Activated B cell treated with CpG ODN at 0.5 μM for 24 hours (primary cell): ENCODE measurements at regions of chr1 and their contacts with region 1.

Region 1: GRCh38 chr1:32179443-32180185 is at the start of gene TXLNA:
- DNase-seq: peak; percentile 89
- ATAC-seq: peak; percentile 91
- H3K4me3 Mint-ChIP-seq: peak within 1 kb of the TSS; percentile 90
- H3K27ac Mint-ChIP-seq: peak within 1 kb of the TSS; percentile 98
- H3K4me1 Mint-ChIP-seq: peaks cover 40% of the 10 kb centered on the region
- H3K27me3 Mint-ChIP-seq: no peaks in the 10 kb centered on the region
- CTCF ChIP-seq: no peak
- total RNA-seq, gene TXLNA: 52.0 and 54.1 TPM in 2 replicates

Region 2: DNA sequence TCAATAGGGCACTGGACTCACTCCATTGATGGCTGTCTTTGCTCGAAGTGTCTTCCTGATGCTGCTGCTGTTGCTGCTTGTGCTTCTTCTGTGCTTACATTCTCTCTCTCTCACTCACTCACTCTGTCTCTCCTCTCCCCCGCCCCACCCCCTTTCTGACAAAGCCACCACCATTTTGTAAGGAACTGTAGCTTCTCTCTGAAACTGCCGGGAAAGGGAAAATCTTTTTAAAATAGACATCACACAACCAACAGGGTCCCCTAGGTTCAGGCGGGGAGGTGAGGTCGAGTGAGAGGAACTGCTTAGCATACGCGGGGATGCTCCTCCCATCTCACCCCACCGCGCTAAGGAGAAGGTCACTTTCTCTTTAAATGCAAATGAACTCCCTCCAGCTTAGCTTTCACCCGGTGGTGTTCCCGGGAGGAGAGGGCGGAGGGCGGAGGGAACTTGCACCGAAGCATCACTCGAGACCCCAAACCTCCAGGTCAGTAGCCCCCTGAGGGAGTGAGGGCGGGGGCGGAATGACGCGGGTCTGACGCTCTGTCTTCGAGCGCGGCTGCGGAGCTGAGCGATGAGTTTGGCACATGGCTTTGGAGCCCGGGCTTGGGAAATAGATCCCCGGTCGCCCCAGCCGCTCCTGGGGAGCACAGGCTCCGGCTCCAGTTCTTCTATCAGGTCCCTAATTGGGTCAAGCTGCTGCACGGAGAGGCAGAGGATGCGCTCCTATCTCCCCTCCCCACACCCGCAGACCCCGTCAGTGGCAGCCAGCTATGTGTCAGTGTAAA is 20.8 kb after region 1 on chr1 and contains the start of gene CCDC28B:
- CTCF ChIA-PET with region 1: interaction called, 4 read pairs
- POLR2A ChIA-PET with region 1: interaction called, 37 read pairs
- intact Hi-C with region 1: loop called (anchors 1 kb)
- DNase-seq: peak; percentile 62
- ATAC-seq: peak; percentile 51
- H3K4me3 Mint-ChIP-seq: peak within 1 kb of the TSS; percentile 87
- H3K27ac Mint-ChIP-seq: peak within 1 kb of the TSS; percentile 87
- H3K4me1 Mint-ChIP-seq: peaks cover 49% of the 10 kb centered on the region
- H3K27me3 Mint-ChIP-seq: no peaks in the 10 kb centered on the region
- CTCF ChIP-seq: no peak
- total RNA-seq, gene CCDC28B: 50.4 and 56.9 TPM in 2 replicates